Activated CD4-positive, alpha-beta T cell treated with anti-CD3 and anti-CD28 coated beads, Interleukin-2, amount 10 ng/mL, durations not matched to agents 24 days and 14 days (primary cell): ENCODE measurements at regions of chrX and their contacts with region 1.

Region 1: DNA sequence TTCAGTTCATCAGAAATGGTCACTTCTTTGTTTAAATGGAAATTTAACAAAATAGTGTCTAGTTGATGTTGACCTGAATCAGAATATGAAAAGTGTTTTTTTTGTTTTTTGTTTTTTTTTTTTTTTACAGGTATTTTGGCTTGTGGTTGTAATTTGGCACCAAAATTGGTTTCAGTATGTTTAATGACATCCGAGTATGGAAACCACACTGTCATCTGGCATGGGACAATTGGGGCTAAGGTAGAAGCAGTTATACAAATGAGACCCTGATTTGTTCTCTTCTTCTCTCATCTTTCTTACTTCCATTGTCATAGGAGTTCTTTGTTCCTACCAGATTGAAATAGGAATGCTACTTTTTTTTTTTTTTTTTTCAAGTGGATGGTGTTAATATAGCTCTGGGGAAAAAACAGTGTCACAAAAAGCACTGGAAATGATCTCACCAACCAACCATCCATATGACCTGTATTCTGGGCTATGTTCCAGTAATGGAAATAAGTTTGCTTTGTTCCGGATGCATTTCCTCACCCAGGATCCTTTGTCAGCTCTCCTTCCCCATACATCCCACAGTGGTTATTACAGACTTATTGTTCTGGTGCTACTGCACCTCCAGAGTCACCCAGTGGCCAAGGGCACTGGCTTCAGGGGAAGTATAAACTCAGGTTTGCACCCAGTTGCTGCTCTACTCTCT is 95.8 kb downstream of the ATXN3L start:
- DNase-seq: no peak
- H3K4me3 Mint-ChIP-seq: no peak overlapping the region
- H3K27ac Mint-ChIP-seq: no peak overlapping the region
- H3K4me1 Mint-ChIP-seq: peaks cover 7% of the 10 kb centered on the region
- H3K27me3 Mint-ChIP-seq: peaks cover 4% of the 10 kb centered on the region

Region 2: GRCh38 chrX:13151828-13152510 is 72.0 kb before region 1 on chrX:
- intact Hi-C with region 1: loop called (anchors 10 kb)
- DNase-seq: peak; percentile 85
- H3K4me3 Mint-ChIP-seq: peak overlapping the region; percentile 50
- H3K27ac Mint-ChIP-seq: peak overlapping the region; percentile 82
- H3K4me1 Mint-ChIP-seq: peaks cover 11% of the 10 kb centered on the region
- H3K27me3 Mint-ChIP-seq: no peaks in the 10 kb centered on the region